Activated CD4-positive, alpha-beta T cell treated with anti-CD3 and anti-CD28 coated beads for 36 hours (primary cell): ENCODE measurements at regions of chr12 and their contacts with region 1.

Region 1: DNA sequence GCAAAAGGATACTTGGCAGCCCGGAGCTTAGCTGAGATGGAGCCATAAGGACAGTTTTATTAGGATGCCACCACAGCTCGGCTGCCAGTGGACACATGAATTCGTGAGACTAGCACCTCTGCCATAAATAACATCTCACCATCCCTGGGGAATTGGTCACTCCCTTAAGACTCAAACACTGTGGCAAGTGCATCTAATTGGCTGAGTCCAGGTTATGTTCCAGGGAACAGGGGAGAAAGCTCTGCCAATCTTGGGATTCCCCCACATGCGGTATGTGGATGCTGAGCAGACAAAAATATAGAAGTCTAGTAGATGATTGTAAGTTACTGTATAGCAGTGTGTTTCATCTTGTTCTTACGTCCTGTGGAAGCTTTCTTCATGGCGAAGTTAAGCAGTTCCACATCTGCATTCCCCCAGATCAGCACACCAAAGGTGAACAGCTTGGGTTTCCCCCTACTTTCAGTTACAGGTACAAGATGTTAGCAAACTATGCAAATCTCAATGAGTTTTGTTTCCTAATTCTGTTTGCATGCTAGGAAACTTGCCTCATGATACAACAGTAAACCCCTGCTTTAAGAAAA is 131.1 kb downstream of the ETV6 start:
- DNase-seq: no peak
- ATAC-seq: peak; percentile 60
- H3K4me3 Mint-ChIP-seq: peak overlapping the region; percentile 2
- H3K27ac Mint-ChIP-seq: peak overlapping the region; percentile 68
- H3K4me1 Mint-ChIP-seq: peaks cover 82% of the 10 kb centered on the region
- H3K27me3 Mint-ChIP-seq: no peaks in the 10 kb centered on the region

Region 2: GRCh38 chr12:11765817-11766794 is 14.5 kb before region 1 on chr12:
- CTCF ChIA-PET with region 1: interaction called, 10 read pairs
- POLR2A ChIA-PET with region 1: interaction called, 11 read pairs
- intact Hi-C with region 1: loop called in 1 of 2 experiments (anchors 2 kb)
- DNase-seq: peak; percentile 90
- ATAC-seq: peak; percentile 89
- H3K4me3 Mint-ChIP-seq: peak overlapping the region; percentile 32
- H3K27ac Mint-ChIP-seq: peak overlapping the region; percentile 84
- H3K4me1 Mint-ChIP-seq: peaks cover 100% of the 10 kb centered on the region
- H3K27me3 Mint-ChIP-seq: no peaks in the 10 kb centered on the region

Region 3: GRCh38 chr12:11805043-11805442 is 24.4 kb after region 1 on chr12:
- CTCF ChIA-PET with region 1: interaction called, 4 read pairs
- POLR2A ChIA-PET with region 1: no interaction called
- intact Hi-C with region 1: loop called in 1 of 2 experiments (anchors 2 kb)
- DNase-seq: no peak
- ATAC-seq: no peak
- H3K4me3 Mint-ChIP-seq: no peak overlapping the region
- H3K27ac Mint-ChIP-seq: no peak overlapping the region
- H3K4me1 Mint-ChIP-seq: peaks cover 49% of the 10 kb centered on the region
- H3K27me3 Mint-ChIP-seq: no peaks in the 10 kb centered on the region

Region 4: DNA sequence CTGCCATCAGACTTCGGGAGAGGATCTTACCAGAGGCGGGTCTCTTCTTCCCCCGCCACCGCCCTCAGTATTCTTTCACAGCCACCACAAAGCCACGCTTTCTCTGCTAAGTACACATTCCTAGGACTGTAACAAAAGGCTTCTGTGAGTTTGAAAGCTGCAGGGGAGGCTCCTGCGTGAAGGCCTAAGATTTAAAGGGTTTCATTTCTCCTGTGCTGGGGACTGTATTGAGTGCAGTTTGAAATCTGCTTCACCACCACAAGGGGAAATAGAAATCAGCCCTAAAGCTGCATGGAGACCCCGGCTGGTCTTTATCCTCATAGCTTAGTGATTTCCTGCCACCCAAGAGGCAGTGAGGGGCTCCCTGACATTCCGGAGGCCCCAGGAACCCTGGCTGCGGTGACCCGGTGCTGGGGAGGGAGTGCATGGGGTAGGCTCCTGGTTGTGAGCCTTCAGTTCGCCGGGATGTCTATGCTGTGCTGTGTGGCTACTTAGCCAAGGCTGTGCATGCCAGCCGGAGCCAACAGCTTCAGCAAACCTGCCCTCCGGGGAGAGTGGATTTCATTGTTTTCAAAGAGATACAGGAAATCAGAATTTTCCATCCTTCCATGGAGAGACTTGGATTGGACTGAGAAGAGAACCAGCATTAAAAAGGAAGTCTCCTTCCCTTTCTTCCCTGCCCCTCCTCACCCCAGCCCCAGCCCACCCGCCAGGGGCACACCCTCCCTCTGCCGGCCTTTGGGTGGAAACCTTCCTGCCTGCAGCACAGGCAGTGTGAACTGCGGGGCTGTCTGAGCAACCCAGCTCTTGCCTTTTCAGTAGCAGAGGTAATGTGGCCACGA is 32.2 kb after region 1 on chr12:
- CTCF ChIA-PET with region 1: interaction called, 4 read pairs
- POLR2A ChIA-PET with region 1: interaction called, 3 read pairs
- intact Hi-C with region 1: loop called in 1 of 2 experiments (anchors 2 kb)
- DNase-seq: peak; percentile 42
- ATAC-seq: peak; percentile 49
- H3K4me3 Mint-ChIP-seq: peak overlapping the region; percentile 46
- H3K27ac Mint-ChIP-seq: peak overlapping the region; percentile 72
- H3K4me1 Mint-ChIP-seq: peaks cover 60% of the 10 kb centered on the region
- H3K27me3 Mint-ChIP-seq: no peaks in the 10 kb centered on the region

Region 5: GRCh38 chr12:11901701-11902524 is 121.3 kb after region 1 on chr12:
- CTCF ChIA-PET with region 1: no interaction called
- POLR2A ChIA-PET with region 1: no interaction called
- intact Hi-C with region 1: loop called in 1 of 2 experiments (anchors 5 kb)
- DNase-seq: peak; percentile 75
- ATAC-seq: peak; percentile 78
- H3K4me3 Mint-ChIP-seq: peak overlapping the region; percentile 39
- H3K27ac Mint-ChIP-seq: peak overlapping the region; percentile 88
- H3K4me1 Mint-ChIP-seq: peaks cover 44% of the 10 kb centered on the region
- H3K27me3 Mint-ChIP-seq: peaks cover 2% of the 10 kb centered on the region